ENCODE measurements at regions of chr12 and their contacts with region 1.

Region 1: GRCh38 chr12:75712252-75712651 is 200.8 kb upstream of the KRR1 start:
- DNase-seq: no peak
- H3K4me3 ChIP-seq: no peak overlapping the region
- H3K4me3 Mint-ChIP-seq: no peak overlapping the region
- H3K27ac Mint-ChIP-seq: no peak overlapping the region
- H3K4me1 ChIP-seq: peaks cover 28% of the 10 kb centered on the region
- H3K4me1 Mint-ChIP-seq: peaks cover 33% of the 10 kb centered on the region
- H3K27me3 ChIP-seq: no peaks in the 10 kb centered on the region
- H3K27me3 Mint-ChIP-seq: no peaks in the 10 kb centered on the region
- CTCF ChIP-seq: no peak

Region 2: DNA sequence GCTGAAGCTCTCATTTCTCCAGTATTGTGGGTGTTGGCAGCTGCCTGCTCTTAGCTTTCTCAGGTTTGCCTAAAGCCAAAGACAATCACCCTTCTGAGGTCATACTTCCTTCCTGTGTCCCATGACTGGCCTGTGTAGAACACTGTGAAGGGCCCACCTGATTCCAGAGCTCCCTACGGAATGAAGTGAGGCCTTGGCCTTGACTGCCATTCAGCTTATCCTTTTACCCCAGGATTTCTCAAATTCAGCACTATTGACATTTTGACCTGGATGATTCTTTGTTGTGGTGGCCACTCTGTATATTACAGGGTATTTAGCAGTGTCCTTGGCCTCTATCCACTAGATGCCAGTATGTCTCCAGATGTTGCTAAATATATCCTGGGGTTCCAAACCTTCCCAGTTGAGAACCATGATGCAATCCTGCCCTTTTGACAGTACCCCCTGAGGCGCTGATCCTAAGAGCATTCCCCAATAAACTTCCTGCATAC is 88.6 kb before region 1 on chr12:
- CTCF ChIA-PET with region 1: no interaction called
- POLR2A ChIA-PET with region 1: no interaction called
- intact Hi-C with region 1: loop called (anchors 5 kb)
- DNase-seq: peak; percentile 46 to 50
- H3K4me3 ChIP-seq: no peak overlapping the region
- H3K4me3 Mint-ChIP-seq: no peak overlapping the region
- H3K27ac Mint-ChIP-seq: peak overlapping the region; percentile 76
- H3K4me1 ChIP-seq: peaks cover 17% of the 10 kb centered on the region
- H3K4me1 Mint-ChIP-seq: peaks cover 20% of the 10 kb centered on the region
- H3K27me3 ChIP-seq: no peaks in the 10 kb centered on the region
- H3K27me3 Mint-ChIP-seq: no peaks in the 10 kb centered on the region
- CTCF ChIP-seq: peak; percentile 20 to 51

Region 3: DNA sequence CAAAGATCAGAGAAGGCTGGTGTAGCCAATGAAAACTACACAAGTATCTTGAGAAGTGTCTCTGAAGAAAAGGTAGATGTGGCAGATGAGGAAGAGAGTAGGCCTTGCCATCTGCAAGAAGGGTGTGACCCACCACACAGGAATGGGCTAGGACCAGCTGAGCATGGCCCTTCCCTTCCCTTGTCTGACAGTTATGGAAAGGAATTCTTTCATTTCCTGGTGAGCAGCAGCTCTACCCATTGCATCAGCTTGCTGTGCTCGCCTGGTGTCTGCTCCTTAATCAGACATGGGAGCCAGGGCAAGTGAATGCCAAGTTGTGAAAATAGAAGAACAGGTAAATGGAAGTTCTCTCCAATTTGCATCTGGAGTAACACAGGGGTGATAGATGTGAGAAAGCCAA is 55.6 kb before region 1 on chr12:
- CTCF ChIA-PET with region 1: no interaction called
- POLR2A ChIA-PET with region 1: no interaction called
- intact Hi-C with region 1: no loop called
- DNase-seq: no peak
- H3K4me3 ChIP-seq: no peak overlapping the region
- H3K4me3 Mint-ChIP-seq: no peak overlapping the region
- H3K27ac Mint-ChIP-seq: no peak overlapping the region
- H3K4me1 ChIP-seq: no peaks in the 10 kb centered on the region; the same call in 1 of the 2 replicates
- H3K4me1 Mint-ChIP-seq: no peaks in the 10 kb centered on the region
- H3K27me3 ChIP-seq: no peaks in the 10 kb centered on the region
- H3K27me3 Mint-ChIP-seq: no peaks in the 10 kb centered on the region
- CTCF ChIP-seq: no peak